Activated T-helper 1 cell treated with anti-CD3 and anti-CD28 coated beads, Interleukin-12 subunit alpha, Interleukin-12 subunit beta, Interleukin-2, Interleukin-4 antibody, amounts not matched to agents 30 ng/mL and 10 ng/mL and 1 ng/mL, durations not matched to agents 14 hours and 24 hours and 36 hours (primary cell): ENCODE measurements at regions of chr13 and their contacts with region 1.

Region 1: DNA sequence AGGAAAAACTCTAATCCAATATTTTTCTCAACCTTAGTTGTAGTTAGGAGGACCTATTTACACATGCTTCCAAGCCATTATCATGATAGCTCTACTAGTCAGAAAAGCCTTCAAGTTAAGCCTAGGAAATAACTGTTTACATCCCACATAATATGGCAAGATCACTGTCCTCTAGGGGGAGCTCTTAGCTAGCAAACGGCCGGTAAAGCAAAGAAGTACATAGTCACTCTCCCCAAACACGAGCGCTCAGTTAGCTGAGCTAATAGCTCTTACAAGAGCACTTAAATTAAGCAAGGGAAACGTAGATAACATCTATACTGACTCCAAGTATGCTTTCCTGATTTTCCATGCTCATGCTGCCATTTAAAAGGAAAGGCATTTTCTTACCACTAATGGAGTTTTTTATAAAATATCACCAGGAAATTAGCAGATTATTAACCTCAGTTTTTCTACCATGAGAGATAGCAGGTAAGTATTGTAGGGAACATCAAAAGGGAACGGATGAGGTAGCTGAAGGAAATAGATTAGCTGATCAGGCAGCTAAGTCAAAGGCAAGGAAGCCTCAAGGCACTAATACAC is 100.6 kb upstream of the PABPC3 start:
- DNase-seq: peak; percentile 42
- H3K4me3 Mint-ChIP-seq: no peak overlapping the region
- H3K27ac Mint-ChIP-seq: no peak overlapping the region
- H3K4me1 Mint-ChIP-seq: peaks cover 4% of the 10 kb centered on the region
- H3K27me3 Mint-ChIP-seq: peaks cover 20% of the 10 kb centered on the region

Region 2: GRCh38 chr13:24911135-24911908 is 84.0 kb before region 1 on chr13:
- intact Hi-C with region 1: no loop called
- DNase-seq: no peak
- H3K4me3 Mint-ChIP-seq: no peak overlapping the region
- H3K27ac Mint-ChIP-seq: no peak overlapping the region
- H3K4me1 Mint-ChIP-seq: peaks cover 5% of the 10 kb centered on the region
- H3K27me3 Mint-ChIP-seq: no peaks in the 10 kb centered on the region

Region 3: DNA sequence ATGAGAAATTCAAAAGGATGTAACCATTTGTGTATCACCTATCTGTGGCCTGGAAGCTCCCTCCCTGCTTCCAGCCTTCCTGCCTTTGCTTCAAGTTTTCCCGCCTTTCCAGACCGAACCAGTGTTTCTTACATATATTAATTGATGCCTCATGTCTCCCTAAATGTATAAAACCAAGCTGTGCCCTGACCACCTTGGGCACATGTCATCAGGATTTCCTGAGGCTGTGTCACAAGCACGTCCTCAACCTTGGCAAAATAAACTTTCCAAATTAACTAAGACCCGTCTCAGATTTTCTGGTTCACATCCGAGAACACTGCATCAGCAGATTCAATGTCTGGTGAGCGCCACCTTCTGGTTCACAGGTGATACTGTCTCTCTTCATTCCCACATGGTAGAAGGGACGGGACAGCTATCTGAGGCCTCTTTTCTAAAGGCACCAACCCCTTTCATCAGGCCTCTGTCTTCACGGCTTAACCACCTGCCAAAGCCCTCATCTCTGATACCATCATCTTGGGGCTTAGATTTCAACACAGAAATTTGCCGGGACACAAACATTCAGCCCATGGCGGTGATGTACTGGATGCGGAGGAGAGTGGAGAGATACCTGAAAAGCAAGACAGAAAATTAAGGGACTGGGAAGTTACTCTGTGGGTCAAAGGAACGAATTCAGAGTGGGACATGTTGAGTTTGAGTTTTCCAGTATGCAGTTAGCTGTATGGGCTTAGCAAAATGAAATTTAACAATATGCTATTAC is 41.9 kb after region 1 on chr13:
- intact Hi-C with region 1: loop called (anchors 1 kb)
- DNase-seq: peak; percentile 30
- H3K4me3 Mint-ChIP-seq: no peak overlapping the region
- H3K27ac Mint-ChIP-seq: no peak overlapping the region
- H3K4me1 Mint-ChIP-seq: peaks cover 4% of the 10 kb centered on the region
- H3K27me3 Mint-ChIP-seq: peaks cover 19% of the 10 kb centered on the region

Region 4: GRCh38 chr13:25114220-25114619 is 118.9 kb after region 1 on chr13:
- intact Hi-C with region 1: loop called (anchors 1 kb)
- DNase-seq: peak; percentile 42
- H3K4me3 Mint-ChIP-seq: no peak overlapping the region
- H3K27ac Mint-ChIP-seq: no peak overlapping the region
- H3K4me1 Mint-ChIP-seq: no peaks in the 10 kb centered on the region
- H3K27me3 Mint-ChIP-seq: peaks cover 32% of the 10 kb centered on the region

Region 5: DNA sequence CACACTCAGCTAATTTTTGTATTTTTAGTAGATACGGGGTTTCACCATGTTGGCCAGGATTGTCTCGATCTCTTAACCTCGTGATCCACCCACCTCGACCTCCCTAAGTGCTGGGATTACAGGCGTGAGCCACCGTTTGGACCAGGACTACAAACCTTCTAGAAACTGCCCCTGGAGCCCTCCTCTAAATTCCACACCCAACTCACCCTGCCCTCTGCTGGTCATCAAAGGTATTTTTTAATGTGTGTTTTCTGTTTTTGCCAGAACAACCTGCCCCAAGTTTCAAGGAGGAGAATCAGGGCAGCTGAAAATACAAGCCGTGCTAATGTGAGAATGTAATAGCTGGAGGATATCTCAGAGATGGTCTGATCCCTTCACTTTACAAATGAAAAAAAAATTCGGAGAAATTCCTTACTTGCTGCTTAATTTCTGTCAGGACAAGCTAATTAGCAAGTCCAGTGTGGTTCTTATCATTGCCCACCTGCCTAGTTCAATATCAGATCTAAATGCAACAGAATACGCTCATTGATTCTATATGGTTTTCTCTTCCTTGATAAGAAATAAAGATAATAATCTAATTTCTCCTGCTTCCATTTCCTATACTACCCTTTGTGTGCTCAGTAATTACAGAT is 380.5 kb after region 1 on chr13:
- intact Hi-C with region 1: loop called (anchors 1 kb)
- DNase-seq: no peak
- H3K4me3 Mint-ChIP-seq: no peak overlapping the region
- H3K27ac Mint-ChIP-seq: no peak overlapping the region
- H3K4me1 Mint-ChIP-seq: no peaks in the 10 kb centered on the region
- H3K27me3 Mint-ChIP-seq: peaks cover 62% of the 10 kb centered on the region